H1 (cell line): ENCODE measurements at regions of chr1 and their contacts with region 1.

Region 1: DNA sequence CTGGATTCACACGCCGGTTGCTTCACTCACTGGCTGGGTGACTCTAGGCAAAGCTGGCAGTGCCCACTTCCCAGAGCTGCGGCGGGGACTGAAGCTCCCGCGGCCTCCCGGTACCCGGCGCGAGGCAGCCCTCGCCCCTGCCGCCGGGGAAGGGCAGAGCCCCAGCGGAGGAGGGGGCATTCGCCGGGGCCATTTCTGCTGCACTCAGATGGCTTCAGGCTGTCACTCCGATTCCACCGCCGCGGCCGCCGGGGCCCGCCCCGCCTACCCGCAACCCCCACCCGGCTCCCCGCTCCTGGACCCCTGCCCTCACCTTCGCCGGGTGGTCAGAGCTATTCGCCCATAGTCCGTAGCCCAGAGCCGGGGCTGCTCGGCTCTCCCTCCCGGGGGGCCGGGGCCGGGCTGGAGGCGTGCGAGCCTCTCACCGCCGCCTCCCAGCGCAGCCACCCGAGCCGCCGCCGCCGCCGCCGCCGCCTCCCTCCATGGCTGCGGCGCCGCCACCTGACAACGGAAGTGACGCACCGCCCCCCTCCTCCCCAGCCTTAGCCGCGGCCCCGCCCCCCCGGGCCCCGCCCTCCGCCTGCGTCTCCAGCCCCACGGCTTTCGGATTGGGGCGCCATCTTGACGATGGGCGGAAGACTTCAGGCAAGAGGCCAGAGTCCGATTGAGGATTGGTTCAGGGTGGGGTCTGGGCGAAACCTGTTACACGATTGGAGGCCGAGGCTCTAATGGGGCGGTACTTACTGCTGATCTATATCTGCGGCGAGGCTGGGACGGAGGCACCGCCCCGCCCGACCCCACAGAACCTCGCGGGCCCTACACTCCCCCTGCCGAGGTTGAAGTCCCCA is at the start of gene STK40:
- DNase-seq: peak; percentile 91 to 98
- H3K4me3 ChIP-seq: peak within 1 kb of the TSS; percentile 71 to 94 (median 92)
- H3K27ac ChIP-seq: peak within 1 kb of the TSS; percentile 94
- H3K4me1 ChIP-seq: peaks cover 6 to 17% (median 10%) of the 10 kb centered on the region in 4 experiments; a peak in 6 of 7 replicates
- H3K27me3 ChIP-seq: no peaks in the 10 kb centered on the region
- CTCF ChIP-seq: no peak
- EP300 ChIP-seq: no peak
- POLR2A ChIP-seq: no peak
- RAD21 ChIP-seq: no peak
- total RNA-seq, gene STK40: 25.3 and 28.6 TPM in 2 replicates

Region 2: GRCh38 chr1:36306902-36307456 is 78.7 kb before region 1 on chr1:
- CTCF ChIA-PET with region 1: interaction called, 4 read pairs
- POLR2A ChIA-PET with region 1: interaction called, 14 read pairs
- DNase-seq: peak; percentile 88 to 97
- H3K4me3 ChIP-seq: peak overlapping the region; percentile 62 to 87 (median 72)
- H3K27ac ChIP-seq: no peak overlapping the region
- H3K4me1 ChIP-seq: peaks cover 0 to 9% (median 6%) of the 10 kb centered on the region in 4 experiments; a peak in 6 of 7 replicates
- H3K27me3 ChIP-seq: no peaks in the 10 kb centered on the region
- CTCF ChIP-seq: no peak
- EP300 ChIP-seq: no peak
- POLR2A ChIP-seq: peak; percentile 88 to 93
- RAD21 ChIP-seq: no peak

Region 3: DNA sequence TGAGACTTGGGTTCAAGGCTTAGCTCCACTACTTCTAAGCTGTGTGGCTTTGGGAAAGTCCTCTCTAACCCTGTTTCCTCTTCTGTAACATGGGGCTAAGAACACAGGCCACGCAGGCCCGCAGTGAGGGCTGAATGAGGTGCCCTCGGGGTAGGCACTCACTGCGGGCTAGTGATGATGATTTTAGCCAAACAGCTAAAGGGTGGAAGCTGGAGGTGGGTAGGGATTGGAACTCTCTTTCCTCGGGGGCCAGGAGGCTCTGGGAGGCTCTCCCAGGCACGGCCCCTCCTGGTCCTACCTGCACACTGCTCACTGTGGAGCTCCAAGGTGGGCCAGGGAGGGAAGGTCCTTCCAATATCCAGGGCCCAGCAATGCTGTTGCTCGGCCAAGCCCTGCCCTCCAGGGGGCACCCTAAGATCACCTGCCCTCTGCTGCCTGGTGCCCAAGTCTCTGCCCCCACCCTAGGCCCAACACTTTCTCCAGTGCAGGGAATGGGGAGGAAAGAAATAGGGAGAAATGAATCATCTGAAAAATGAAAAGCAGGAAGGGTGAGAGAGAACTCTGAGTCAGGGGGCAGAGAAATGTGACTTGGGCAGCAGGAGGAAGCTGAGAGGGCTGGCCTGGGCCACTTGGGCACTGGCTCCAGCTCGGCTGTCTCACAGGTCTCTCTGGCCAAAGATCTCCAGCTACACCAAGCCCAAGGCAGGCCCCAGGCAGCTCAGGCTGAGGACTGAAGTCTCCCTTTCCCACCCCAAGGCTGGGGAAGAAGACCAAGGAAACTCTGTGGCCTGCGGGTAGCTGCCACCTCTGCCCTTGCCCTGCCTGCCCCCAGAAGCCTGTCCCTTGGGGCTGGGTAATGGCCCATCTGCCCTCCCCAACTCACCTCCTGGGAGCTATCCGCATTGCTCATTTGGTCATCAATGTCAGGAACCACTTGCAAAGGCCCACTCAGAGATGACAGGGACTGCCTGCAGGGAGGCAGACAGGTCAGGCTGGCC is 42.9 kb before region 1 on chr1:
- CTCF ChIA-PET with region 1: interaction called, 14 read pairs
- POLR2A ChIA-PET with region 1: interaction called, 12 read pairs
- DNase-seq: peak in 1 of 2 experiments; percentile 79
- H3K4me3 ChIP-seq: no peak overlapping the region
- H3K27ac ChIP-seq: no peak overlapping the region
- H3K4me1 ChIP-seq: no peaks in the 10 kb centered on the region; a peak in 1 of 7 replicates
- H3K27me3 ChIP-seq: no peaks in the 10 kb centered on the region
- CTCF ChIP-seq: peak; percentile 80 to 94 (median 85)
- EP300 ChIP-seq: no peak
- POLR2A ChIP-seq: no peak
- RAD21 ChIP-seq: peak; percentile 86 to 90

Region 4: DNA sequence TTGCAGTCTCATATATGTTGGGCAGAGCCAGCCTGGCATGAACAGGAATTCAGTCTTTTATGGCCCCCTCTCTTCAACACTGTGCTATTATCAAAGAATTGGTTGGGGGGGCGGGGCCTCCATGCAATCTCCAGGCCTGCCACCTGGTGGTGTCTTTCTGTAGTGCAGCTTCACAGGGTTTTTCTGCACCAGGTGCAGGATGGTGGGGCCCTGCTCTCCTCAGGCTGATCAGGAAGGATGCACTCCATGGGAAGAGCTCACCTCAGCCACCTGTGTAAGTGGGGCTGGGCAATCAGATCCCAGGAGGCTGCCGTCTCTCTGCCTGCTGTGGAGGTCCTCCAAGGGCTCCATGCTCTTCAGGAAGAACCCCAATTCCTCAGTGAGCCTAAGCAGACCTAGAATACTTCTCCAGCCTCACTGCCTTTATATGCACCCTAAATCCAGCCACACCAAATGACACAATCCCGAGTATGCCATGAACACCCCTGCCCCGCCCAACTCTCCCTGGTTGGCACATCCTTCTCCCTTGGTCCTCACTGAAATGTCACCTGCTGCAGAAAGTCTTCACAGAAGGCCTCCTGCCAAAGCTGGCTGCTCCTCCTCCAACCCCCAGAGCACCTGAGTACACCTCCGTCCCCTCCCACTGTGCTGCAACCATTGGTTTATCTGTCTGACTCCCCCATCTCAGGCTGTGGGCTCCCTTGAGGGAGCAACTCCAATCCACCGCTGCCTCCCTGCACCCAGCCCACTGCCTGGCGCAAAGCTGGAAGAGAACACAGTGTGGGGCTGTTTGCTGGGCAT is 16.4 kb before region 1 on chr1:
- CTCF ChIA-PET with region 1: interaction called, 90 read pairs
- POLR2A ChIA-PET with region 1: interaction called, 33 read pairs
- DNase-seq: peak; percentile 46 to 98
- H3K4me3 ChIP-seq: no peak overlapping the region
- H3K27ac ChIP-seq: no peak overlapping the region
- H3K4me1 ChIP-seq: peaks cover 12 to 33% (median 20%) of the 10 kb centered on the region in 4 experiments
- H3K27me3 ChIP-seq: no peaks in the 10 kb centered on the region
- CTCF ChIP-seq: peak; percentile 85 to 94 (median 87)
- EP300 ChIP-seq: no peak
- POLR2A ChIP-seq: no peak
- RAD21 ChIP-seq: peak; percentile 55 to 63

Region 5: GRCh38 chr1:36406440-36406839 is 20.8 kb after region 1 on chr1:
- CTCF ChIA-PET with region 1: interaction called, 6 read pairs
- POLR2A ChIA-PET with region 1: interaction called, 15 read pairs
- DNase-seq: no peak
- H3K4me3 ChIP-seq: no peak overlapping the region
- H3K27ac ChIP-seq: no peak overlapping the region
- H3K4me1 ChIP-seq: peaks cover 0 to 6% (median 6%) of the 10 kb centered on the region in 4 experiments; a peak in 4 of 7 replicates
- H3K27me3 ChIP-seq: no peaks in the 10 kb centered on the region
- CTCF ChIP-seq: no peak
- EP300 ChIP-seq: no peak
- POLR2A ChIP-seq: no peak
- RAD21 ChIP-seq: no peak

Region 6: GRCh38 chr1:36463803-36464604 is 78.4 kb after region 1 on chr1 and contains the start of gene MRPS15:
- CTCF ChIA-PET with region 1: no interaction called
- POLR2A ChIA-PET with region 1: interaction called, 16 read pairs
- DNase-seq: peak; percentile 74 to 97
- H3K4me3 ChIP-seq: peak within 1 kb of the TSS; percentile 90 to 95 (median 93)
- H3K27ac ChIP-seq: peak within 1 kb of the TSS; percentile 84
- H3K4me1 ChIP-seq: peaks cover 0 to 3% (median 0%) of the 10 kb centered on the region in 4 experiments; a peak in 2 of 7 replicates
- H3K27me3 ChIP-seq: peaks cover 2 to 26% (median 21%) of the 10 kb centered on the region in 4 experiments
- CTCF ChIP-seq: no peak
- EP300 ChIP-seq: peak; percentile 36 to 87; a peak in 2 of 3 replicates
- POLR2A ChIP-seq: peak; percentile 36 to 96
- RAD21 ChIP-seq: no peak
- total RNA-seq, gene MRPS15: 129 and 130 TPM in 2 replicates